ENCODE measurements at regions of chr14 and their contacts with region 1.

Region 1: DNA sequence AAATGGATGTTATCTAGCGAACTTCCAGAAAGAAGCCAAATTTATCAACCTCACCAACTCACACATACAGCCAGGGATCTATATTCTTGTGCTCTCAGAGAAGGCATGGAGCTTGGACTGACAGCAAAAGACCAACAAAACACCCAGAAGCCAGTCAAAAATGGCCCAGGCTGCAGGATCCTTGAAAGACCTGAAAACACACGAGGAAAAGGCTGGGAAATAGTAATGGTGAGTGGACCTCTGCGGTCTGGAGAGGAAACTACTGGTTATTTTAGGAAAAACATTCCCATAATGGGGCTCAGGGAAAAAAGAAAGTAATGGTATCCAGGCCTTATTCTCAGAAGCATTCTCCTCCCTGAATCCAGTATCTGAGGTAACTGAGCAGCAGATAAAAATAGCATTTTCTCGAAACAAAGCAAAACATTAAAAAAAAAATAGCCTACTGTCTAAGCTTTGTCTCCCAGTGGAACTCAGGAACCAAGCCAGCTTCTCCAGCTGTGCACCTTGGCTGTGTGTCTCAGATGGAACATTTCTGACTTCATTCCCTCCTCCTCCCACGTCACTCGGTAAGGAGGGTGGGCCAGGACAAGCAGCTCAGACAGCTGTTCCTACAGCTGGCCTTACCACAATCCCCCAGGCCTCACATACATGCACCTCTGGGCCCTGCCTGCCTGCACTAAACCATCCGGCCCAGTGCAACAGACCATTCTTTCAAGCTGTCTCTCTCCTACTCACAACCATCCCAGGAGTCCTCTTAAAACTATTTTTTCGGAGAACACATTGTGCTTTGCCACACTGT is 249.9 kb downstream of the DAD1 start:
- DNase-seq: no peak
- H3K4me3 ChIP-seq: no peak overlapping the region
- H3K27ac ChIP-seq: no peak overlapping the region
- H3K4me1 ChIP-seq: no peaks in the 10 kb centered on the region
- H3K27me3 ChIP-seq: no peaks in the 10 kb centered on the region
- CTCF ChIP-seq: no peak

Region 2: GRCh38 chr14:22231018-22231417 is 108.1 kb before region 1 on chr14:
- CTCF ChIA-PET with region 1: no interaction called
- dilution Hi-C with region 1: loop called (anchors 5 kb)
- in situ Hi-C with region 1: no loop called
- intact Hi-C with region 1: no loop called
- DNase-seq: no peak
- H3K4me3 ChIP-seq: no peak overlapping the region
- H3K27ac ChIP-seq: no peak overlapping the region
- H3K4me1 ChIP-seq: peaks cover 3% of the 10 kb centered on the region
- H3K27me3 ChIP-seq: no peaks in the 10 kb centered on the region
- CTCF ChIP-seq: no peak

Region 3: DNA sequence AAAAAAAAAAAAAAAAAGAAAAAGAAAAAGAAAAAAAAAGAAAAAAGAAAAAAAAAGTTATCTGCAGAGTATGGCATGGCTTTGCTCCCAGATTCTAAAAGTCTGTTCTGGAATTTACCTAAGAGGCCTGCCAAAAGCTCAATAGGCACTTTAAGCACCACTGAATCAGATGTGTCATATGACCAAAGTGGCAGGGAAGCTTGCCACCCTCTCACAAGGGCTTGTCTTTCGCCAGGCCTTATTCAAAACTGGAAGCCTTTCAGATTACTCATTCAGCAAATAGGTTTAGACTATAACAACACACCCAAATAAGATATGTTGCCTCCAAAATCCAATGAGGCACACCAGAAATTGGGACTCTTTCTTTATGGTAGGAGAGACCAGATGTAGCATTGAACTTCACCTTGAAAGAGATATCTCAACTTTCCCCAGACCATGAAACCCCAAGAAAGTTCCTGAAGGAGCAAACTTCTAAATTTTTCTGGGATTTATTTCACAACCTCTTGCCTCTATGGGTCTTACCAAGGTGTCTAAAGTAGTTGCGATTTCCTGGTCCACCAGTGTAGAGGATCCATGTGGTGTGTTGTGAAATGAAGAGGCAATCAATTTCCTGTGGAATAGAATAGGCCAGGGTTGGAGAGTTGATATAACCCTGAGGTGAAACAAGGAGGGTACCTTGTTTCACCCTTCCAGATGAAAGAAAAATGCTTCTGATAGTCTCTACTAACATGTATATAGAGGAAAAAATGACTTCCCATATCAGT is 31.1 kb after region 1 on chr14:
- CTCF ChIA-PET with region 1: no interaction called
- dilution Hi-C with region 1: loop called (anchors 5 kb)
- in situ Hi-C with region 1: no loop called
- intact Hi-C with region 1: no loop called
- DNase-seq: peak; percentile 81
- H3K4me3 ChIP-seq: no peak overlapping the region
- H3K27ac ChIP-seq: no peak overlapping the region
- H3K4me1 ChIP-seq: peaks cover 10% of the 10 kb centered on the region
- H3K27me3 ChIP-seq: no peaks in the 10 kb centered on the region
- CTCF ChIP-seq: no peak